ENCODE measurements at regions of chr12 and their contacts with region 1.

Region 1: GRCh38 chr12:111451649-111452129 is 46.0 kb downstream of the SH2B3 start:
- DNase-seq: no peak
- ATAC-seq: peak; percentile 40
- H3K4me3 Mint-ChIP-seq: no peak overlapping the region
- H3K27ac Mint-ChIP-seq: no peak overlapping the region
- H3K4me1 Mint-ChIP-seq: peaks cover 16% of the 10 kb centered on the region
- H3K27me3 Mint-ChIP-seq: no peaks in the 10 kb centered on the region

Region 2: DNA sequence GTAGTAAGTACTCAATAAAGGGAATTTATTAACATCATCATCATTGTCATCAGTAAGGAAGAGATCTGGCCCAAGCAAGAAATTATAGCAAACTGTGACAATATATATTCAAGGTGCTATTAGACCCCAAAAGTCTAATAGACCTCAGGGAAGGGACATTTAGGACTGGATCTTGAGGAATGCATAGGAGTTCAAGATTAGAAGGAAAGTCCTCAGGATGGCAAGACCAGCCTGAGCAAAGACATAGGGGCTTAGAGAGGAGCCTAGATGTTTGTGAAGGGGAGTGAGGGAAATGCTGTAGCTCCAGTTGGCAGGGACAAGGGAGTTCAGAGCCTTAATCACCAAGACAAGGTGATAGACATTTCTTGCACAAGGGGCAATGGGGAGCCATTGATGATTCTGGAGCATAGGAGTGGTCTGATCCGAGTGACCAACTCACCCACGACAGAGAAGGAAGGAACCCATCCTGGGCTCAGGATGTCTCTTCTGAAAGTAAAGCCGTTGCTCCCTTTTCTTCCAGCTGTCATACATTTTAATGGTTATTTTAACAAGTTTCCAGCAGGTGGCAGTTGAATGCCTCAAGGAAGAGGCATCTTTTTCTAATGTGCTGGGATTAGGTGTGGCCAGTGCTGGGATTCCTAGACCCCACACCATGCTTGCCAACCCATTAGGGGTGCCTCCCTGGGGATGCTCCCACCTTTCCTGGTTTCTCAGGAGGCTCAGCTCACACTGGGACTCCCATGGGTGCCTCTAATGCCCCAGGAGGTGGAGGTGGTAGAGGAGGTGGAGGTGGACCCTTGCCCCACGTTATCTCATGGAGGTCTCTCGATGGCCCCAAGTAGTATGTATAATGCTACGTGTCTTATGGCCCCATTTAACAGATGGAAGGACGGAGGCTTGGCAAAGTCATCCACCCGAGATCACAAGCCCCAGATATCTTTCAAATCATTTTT is 120.6 kb before region 1 on chr12:
- CTCF ChIA-PET with region 1: interaction called, 8 read pairs
- POLR2A ChIA-PET with region 1: no interaction called
- intact Hi-C with region 1: loop called in 1 of 2 experiments (anchors 1 kb)
- DNase-seq: no peak
- ATAC-seq: no peak
- H3K4me3 Mint-ChIP-seq: no peak overlapping the region
- H3K27ac Mint-ChIP-seq: no peak overlapping the region
- H3K4me1 Mint-ChIP-seq: no peaks in the 10 kb centered on the region
- H3K27me3 Mint-ChIP-seq: no peaks in the 10 kb centered on the region

Region 3: DNA sequence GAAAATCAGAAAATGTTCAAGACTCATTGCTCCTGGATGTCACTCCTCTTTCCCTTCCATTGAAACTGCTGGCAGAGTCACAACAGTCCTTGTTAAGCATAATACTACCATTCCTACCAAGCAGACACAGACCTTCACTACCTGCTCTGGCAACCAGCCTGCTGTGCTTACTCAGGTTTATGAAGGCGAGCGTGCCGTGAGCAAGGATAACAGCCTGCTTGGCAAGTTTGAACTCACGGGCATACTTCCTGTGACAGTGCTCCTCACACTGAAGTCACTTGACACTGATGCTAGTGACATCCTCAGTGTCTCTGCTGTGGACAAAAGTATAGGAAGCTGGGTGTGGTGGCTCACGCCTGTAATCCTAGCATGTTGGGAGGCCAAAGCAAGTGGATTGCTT is 67.1 kb before region 1 on chr12:
- CTCF ChIA-PET with region 1: interaction called, 12 read pairs
- POLR2A ChIA-PET with region 1: no interaction called
- intact Hi-C with region 1: no loop called
- DNase-seq: no peak
- ATAC-seq: no peak
- H3K4me3 Mint-ChIP-seq: no peak overlapping the region
- H3K27ac Mint-ChIP-seq: no peak overlapping the region
- H3K4me1 Mint-ChIP-seq: no peaks in the 10 kb centered on the region
- H3K27me3 Mint-ChIP-seq: peaks cover 3% of the 10 kb centered on the region

Region 4: DNA sequence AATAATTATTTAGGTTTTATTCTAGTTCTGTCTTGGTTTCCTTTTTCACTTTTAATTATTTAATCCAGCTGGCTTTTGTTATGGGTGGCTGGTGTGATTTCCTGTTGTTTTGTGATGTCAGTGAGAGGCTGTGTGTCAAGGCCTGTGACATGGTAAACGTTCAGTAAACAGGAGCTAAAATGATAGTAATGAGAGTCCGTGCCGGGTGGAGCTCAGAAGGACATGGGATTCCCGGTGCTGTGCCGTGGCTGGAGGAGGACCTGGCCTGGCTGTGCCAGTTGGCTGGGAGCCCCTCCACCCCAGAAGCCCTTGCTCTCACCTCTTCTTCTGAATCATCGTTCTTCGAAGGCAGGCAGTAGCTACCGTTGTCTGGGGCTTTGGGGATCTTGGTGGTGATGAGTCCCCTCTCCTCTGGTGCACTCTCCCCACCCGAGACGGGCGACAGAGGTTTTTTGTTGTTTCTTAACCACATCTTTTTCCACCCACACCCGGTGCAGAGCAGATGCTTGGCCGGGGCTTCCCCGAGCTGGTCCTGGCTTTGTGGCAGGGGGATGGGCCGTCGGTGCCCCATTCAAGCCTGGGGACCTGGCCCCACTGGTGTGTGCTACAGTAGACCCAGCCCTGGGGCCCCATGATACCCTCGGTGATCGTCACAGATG is 16.9 kb before region 1 on chr12:
- CTCF ChIA-PET with region 1: interaction called, 26 read pairs
- POLR2A ChIA-PET with region 1: interaction called, 7 read pairs
- intact Hi-C with region 1: no loop called
- DNase-seq: peak; percentile 88
- ATAC-seq: peak; percentile 80
- H3K4me3 Mint-ChIP-seq: peak overlapping the region; percentile 35
- H3K27ac Mint-ChIP-seq: peak overlapping the region; percentile 81
- H3K4me1 Mint-ChIP-seq: peaks cover 89% of the 10 kb centered on the region
- H3K27me3 Mint-ChIP-seq: no peaks in the 10 kb centered on the region

Region 5: GRCh38 chr12:111529424-111530368 is 78.0 kb after region 1 on chr12:
- CTCF ChIA-PET with region 1: interaction called, 12 read pairs
- POLR2A ChIA-PET with region 1: no interaction called
- intact Hi-C with region 1: loop called in 1 of 2 experiments (anchors 2 kb)
- DNase-seq: peak; percentile 78
- ATAC-seq: peak; percentile 90
- H3K4me3 Mint-ChIP-seq: no peak overlapping the region
- H3K27ac Mint-ChIP-seq: peak overlapping the region; percentile 10
- H3K4me1 Mint-ChIP-seq: peaks cover 13% of the 10 kb centered on the region
- H3K27me3 Mint-ChIP-seq: no peaks in the 10 kb centered on the region